Right ventricle myocardium superior (tissue), 1 donor: ENCODE measurements at regions of chr1 and their contacts with region 1.

Region 1: GRCh38 chr1:226974544-226975258 is 34.6 kb downstream of the COQ8A start:
- DNase-seq: peak; percentile 80
- ATAC-seq: peak; percentile 54

Region 2: DNA sequence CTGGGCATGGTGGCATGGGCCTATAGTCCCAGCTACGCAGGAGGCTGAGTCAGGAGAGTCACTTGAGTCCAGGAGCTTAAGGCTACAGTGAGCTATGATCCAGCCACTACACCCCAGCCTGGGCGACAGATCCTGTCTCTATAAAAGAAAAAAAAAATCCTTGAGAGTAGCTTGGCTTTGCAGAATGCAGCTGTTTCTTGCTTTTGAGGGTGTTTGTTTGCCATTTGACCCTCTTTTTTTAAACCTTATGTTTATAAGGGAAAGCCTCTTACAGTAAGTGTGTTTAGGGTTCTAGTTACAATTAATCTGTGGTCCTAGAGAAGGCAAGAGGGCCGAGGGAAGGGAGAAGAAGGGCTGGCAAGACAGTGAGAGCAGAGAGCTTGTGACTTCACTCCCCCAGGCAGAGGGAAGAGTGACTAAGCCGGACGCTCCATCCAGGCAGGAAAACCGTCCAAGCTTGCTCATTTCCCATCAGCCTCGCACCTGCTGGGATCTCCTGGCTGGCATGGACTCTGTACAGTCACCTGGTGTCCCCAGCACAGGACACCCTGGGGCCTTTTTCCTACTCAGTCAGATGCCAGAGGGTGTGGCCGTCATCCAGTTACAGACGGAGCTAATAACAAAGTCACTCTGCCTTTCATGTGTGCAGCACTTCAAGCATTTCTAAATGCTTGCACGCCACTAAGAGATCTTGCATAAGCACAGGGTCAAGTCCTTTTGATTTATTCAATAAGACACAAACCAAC is 159.8 kb before region 1 on chr1:
- intact Hi-C with region 1: no loop called
- DNase-seq: peak; percentile 60
- ATAC-seq: peak; percentile 80

Region 3: GRCh38 chr1:226920446-226920894 is 54.2 kb before region 1 on chr1:
- intact Hi-C with region 1: loop called (anchors 5 kb)
- DNase-seq: peak; percentile 84
- ATAC-seq: peak; percentile 89

Region 4: DNA sequence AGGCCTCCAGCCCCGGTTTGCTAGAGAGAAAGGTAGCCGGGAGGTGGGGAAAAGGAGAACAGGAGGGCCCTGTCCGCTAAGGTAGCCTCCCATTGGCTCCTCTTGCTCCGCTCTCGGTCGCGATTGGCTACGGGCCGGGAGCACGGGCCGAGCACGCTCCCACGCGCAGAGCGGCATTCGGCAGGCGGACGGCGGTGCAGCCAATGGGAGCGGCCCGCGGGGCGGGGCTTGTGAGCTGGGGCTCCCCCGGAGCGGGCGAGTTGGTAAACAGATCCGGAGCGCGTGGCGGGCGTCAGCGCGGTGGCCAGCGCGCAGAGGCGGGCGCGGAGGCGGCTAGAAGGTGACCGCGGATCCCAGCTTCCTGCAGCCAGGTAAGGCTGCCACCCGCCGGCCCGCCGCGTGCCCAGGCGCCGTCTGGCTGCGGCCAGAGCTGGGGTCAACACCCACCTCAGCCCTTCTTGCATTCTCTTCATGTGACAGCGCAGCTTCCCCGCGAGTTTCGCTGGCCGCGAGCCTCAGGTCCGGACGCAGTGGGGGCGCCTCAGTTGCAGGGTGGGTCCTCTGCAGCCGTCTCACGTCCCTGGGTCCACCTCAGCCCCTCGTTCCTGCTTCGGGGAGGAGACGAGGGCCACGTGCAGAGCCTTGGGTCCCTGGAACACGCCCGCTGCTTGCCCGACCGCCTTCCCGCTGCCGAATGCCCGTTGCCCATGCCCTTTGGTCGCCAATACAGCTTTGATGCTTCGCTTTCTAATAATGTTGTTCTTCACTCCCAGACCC is 34.5 kb before region 1 on chr1 and contains the start of gene COQ8A:
- intact Hi-C with region 1: loop called (anchors 5 kb)
- DNase-seq: peak; percentile 100
- ATAC-seq: peak; percentile 92
- total RNA-seq, gene COQ8A: 393 TPM